ENCODE measurements at regions of chr11 and their contacts with region 1.

Region 1: DNA sequence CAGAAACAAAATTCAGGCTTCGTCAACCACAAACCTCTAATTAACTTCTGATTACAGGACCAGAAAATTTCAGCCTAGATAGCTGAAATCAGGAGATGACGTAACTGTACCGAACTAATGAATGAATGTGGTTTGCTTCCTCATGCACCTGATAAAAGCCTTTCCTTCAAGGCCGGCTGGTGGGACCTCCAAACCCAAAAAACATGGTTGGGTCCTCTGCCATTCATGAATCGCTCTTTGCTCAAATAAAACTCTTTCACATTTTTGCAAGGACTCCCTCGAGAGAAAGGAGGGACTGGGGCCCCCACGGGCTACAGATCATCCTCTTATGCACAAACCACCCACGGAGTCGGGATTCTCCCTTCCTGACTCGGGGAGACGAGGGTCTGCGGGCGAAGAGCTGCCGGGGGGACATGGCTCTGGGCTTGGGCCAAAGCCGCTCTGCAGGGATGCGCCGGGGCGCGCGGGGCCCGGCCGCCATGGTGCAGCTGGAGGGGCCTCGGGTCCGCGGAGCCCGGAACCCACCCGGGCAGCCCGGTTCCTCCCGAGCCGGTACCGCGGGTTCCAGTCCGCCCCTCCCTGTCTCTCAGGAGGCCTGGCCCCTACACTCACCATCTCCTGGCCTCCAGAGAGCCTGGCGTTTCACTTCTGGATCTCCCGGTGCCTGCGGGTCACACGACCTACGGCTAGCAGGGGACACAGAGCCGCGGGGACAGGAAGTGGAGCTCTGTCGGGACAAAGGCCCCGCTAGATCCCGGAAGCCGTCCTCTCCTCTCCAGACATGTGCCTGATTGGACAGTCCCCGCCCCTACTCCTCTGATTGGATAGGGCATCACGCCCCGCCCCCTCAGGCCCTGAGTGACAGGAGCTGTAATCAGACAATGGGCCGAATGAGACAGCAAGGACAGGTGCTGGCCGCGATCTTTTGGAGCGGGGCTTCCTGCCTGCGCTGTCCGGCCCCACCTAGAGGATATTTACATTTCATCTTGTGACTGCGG is at the start of gene ZNF195:
- DNase-seq: peak; percentile 99
- H3K4me3 Mint-ChIP-seq: peak within 1 kb of the TSS; percentile 99
- H3K27ac Mint-ChIP-seq: peak within 1 kb of the TSS; percentile 98
- H3K4me1 Mint-ChIP-seq: peaks cover 7% of the 10 kb centered on the region
- H3K27me3 Mint-ChIP-seq: no peaks in the 10 kb centered on the region
- CTCF ChIP-seq: no peak
- total RNA-seq, gene ZNF195: 29.1 and 42.5 TPM in 2 replicates

Region 2: DNA sequence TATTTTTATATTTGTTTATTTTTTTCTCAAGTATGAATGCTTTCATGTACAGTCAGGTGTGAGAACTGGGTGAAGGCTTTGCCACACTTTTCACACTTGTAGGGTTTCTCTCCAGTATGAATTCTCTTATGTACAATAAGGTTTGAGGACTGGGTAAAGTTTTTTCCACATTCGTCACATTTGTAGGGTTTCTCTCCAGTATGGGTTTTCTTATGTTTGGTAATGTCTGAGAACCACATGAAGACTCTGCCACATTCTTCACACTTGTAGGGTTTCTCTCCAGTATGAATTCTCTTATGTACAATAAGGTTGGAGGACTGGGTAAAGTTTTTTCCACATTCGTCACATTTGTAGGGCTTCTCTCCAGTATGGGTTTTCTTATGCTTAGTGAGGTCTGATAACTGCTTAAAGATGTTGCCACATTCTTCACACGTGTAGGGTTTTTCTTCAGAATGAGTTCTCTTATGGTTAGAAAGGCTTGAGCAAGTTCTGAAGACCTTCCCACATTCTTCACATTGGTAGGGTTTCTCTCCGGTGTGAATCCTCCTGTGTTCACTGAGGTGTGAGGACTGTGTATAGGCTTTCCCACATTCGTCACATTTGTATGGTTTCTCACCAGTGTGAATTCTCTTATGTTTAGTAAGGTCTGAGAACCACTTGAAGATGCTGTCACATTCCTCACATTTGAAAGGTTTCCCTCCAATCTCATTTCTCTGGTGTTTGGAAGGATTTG is 19.5 kb before region 1 on chr11:
- CTCF ChIA-PET with region 1: no interaction called
- POLR2A ChIA-PET with region 1: interaction called, 10 read pairs
- intact Hi-C with region 1: no loop called
- DNase-seq: peak; percentile 2
- H3K4me3 Mint-ChIP-seq: no peak overlapping the region
- H3K27ac Mint-ChIP-seq: no peak overlapping the region
- H3K4me1 Mint-ChIP-seq: no peaks in the 10 kb centered on the region
- H3K27me3 Mint-ChIP-seq: no peaks in the 10 kb centered on the region
- CTCF ChIP-seq: no peak